Gastrocnemius medialis (tissue), 4 donors: ENCODE measurements at regions of chr5 and their contacts with region 1.

Region 1: GRCh38 chr5:151771259-151772028 is at the start of gene G3BP1:
- DNase-seq: peak; percentile 100
- ATAC-seq: peak; percentile 90 to 93
- H3K4me3 ChIP-seq: peak within 1 kb of the TSS; percentile 78 to 92 (median 89)
- H3K27ac ChIP-seq: peak within 1 kb of the TSS; percentile 98 to 100 (median 99)
- H3K4me1 ChIP-seq: peaks cover 38 to 42% of the 10 kb centered on the region in 2 donors
- H3K27me3 ChIP-seq: no peaks in the 10 kb centered on the region
- CTCF ChIP-seq: peak in 3 of 5 experiments; percentile 31 to 59 (median 46)
- POLR2A ChIP-seq: peak; percentile 95 to 98
- total RNA-seq, gene G3BP1: 80.5 to 114 (median 108) TPM

Region 2: DNA sequence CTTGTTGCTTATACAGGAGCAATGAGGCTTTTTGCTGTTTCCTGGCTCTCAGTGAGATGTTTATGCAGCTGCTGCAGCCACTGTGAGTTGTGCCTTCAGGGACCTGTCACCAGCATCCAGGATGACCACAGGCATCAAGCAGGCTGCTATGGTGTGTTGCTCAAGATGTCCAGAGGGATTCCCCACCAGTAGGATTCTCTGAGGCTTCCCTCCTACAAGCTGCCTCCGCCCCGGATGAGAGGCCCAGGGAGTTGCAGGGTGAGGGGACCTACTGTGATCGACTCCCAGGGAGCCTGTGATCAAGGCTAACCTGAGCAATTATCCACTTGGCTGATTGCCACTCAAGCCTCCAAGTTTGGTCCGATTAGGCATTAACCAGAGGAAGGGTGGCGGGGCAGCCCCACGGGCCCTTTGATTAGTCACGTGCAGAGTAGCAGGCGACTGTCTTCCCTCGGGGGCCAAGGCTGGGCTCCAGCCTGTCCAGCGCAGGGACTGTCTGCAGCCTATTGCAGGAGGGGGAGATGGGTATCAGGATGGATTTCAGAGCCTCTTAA is 178.5 kb before region 1 on chr5:
- in situ Hi-C with region 1: no loop called
- intact Hi-C with region 1: no loop called
- DNase-seq: no peak
- ATAC-seq: no peak
- H3K4me3 ChIP-seq: no peak overlapping the region
- H3K27ac ChIP-seq: no peak overlapping the region
- H3K4me1 ChIP-seq: no peaks in the 10 kb centered on the region
- H3K27me3 ChIP-seq: no peaks in the 10 kb centered on the region
- CTCF ChIP-seq: no peak
- POLR2A ChIP-seq: no peak

Region 3: DNA sequence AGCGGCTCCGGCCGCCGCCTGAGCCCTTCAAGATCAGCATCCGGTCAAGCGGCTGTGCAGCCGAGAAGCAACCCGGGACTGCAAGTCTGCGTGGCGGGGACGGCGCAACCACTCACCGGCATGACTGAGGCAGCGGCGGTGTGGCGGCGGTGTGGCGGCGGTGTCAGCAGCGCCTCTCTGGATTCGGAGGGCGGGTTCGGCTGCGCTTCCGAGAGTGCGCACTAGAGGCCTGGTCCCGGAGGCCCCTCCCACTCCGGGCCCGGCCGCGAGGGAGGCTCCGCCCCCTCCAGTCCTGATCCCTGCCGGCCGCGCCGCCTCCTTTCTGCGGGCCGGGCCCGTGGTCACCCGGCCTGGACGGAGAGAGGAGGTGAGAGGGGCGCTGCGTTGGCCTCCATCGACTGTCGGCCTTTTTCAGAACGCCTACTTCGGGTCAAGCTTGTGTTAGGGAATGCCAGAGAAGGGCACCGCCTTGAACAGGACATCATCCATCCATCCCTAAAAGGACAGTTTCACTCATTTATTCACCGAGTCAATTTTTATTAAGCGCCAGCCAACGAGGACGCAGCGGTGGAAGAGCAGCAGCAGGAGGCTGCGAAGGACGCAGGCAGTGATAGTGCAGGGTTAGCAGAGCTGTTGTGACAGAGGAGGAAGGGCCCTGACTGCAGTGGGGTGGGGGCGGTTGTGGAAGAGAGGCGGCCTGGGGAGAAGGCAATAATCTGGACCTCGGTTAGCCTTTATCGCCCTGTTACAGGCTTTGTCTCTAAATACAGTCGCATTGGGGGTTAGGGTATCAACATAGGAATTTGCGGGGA is 12.8 kb before region 1 on chr5 and contains the start of gene ATOX1:
- in situ Hi-C with region 1: no loop called
- intact Hi-C with region 1: loop called (anchors 1 kb)
- DNase-seq: peak; percentile 83 to 90
- ATAC-seq: peak; percentile 93
- H3K4me3 ChIP-seq: peak within 1 kb of the TSS; percentile 84 to 95 (median 90)
- H3K27ac ChIP-seq: peak within 1 kb of the TSS; percentile 80 to 96 (median 92)
- H3K4me1 ChIP-seq: peaks cover 15 to 25% of the 10 kb centered on the region in 2 donors
- H3K27me3 ChIP-seq: no peaks in the 10 kb centered on the region
- CTCF ChIP-seq: peak in 4 of 5 experiments; percentile 19 to 54 (median 40)
- POLR2A ChIP-seq: peak; percentile 88 to 90
- total RNA-seq, gene ATOX1: 31.4 to 71.6 (median 55.3) TPM